HEK293T (cell line): ENCODE measurements at regions of chr7 and their contacts with region 1.

Region 1: DNA sequence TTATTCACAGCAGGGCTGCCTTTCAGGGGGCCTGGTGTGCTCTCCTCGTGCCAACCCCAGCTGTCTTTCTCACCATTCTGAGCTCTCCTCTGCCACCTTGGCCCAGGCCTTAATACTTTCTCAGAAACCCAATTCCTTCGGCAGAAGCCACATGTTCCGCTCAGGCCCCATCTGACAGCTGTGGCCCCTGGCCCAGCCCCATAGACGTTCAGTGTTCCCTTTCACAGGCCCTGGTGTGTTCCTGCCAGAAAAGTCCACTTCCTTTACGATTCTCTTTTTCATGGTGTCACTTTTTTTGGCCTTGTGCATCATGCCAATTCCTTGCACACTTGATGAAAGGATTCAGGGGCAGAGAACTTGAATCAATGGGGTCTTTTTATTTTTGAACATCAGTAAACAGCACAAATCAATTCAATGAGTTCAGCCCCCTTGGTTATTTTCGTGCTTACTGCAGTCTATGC is 15.9 kb upstream of the GPNMB start:
- DNase-seq: no peak

Region 2: GRCh38 chr7:23211613-23212042 is 19.0 kb before region 1 on chr7:
- CTCF ChIA-PET with region 1: no interaction called
- POLR2A ChIA-PET with region 1: no interaction called
- DNase-seq: no peak

Region 3: GRCh38 chr7:23597094-23598091 is 366.7 kb after region 1 on chr7 and contains the start of gene CCDC126:
- CTCF ChIA-PET with region 1: interaction called, 10 read pairs
- POLR2A ChIA-PET with region 1: no interaction called
- DNase-seq: peak; percentile 92